ENCODE measurements at regions of chr5 and their contacts with region 1.

Region 1: DNA sequence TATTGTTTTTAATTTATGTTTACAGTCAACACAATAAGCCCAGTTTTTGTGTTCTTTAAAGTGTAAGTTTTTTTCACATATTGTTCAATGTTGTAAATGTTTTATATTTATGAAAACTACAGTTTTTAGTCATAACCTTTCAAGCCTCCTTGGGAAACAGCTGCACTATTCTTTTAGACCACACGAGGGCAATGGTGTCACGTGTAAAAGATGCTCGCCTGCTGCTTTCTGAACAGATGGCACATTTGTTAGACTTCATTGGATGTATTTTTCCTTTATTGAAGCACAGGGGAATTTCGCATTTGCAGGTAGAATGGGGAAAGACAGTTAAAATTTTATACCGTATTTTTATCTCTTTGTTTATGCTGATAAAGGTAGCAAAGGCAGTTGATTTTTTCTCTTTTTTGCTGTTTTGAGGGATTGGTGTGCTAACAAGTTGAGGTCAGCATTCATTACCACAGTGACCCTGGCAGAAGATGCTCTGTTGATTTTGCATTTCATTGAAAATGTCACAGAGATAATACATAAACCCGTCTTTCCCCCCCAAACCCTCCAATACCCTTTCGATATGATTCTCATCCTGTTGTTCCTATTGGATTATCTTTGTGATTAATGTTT is 59.0 kb downstream of the MAT2B start:
- DNase-seq: peak in 1 of 2 donors; percentile 67
- H3K4me3 ChIP-seq: no peak overlapping the region
- H3K27ac ChIP-seq: no peak overlapping the region
- H3K4me1 ChIP-seq: peaks cover 0 to 16% (median 9%) of the 10 kb centered on the region in 4 donors
- H3K27me3 ChIP-seq: peaks cover 0 to 27% of the 10 kb centered on the region in 2 donors
- CTCF ChIP-seq: peak; percentile 75 to 85

Region 2: DNA sequence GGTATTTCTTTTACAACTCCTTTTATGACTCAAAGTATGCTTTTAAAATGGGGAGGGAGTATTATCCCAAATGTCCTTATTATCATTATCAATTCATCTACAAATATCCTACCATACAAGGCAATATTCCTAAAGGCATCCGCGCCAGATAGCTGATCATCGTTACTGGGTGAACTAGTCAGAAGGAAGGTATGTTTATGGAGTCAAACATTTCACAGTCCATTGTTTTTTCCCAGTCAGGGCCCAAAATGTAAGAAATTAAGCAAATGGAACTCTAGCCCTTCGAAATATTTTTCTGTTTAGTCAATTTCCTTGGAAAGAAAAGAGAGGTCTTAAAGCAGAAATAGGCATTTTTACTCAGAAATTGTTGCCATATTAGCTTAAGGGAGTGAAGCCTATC is 315.6 kb before region 1 on chr5:
- intact Hi-C with region 1: no loop called
- DNase-seq: no peak
- H3K4me3 ChIP-seq: no peak overlapping the region
- H3K27ac ChIP-seq: no peak overlapping the region
- H3K4me1 ChIP-seq: no peaks in the 10 kb centered on the region
- H3K27me3 ChIP-seq: no peaks in the 10 kb centered on the region
- CTCF ChIP-seq: no peak

Region 3: DNA sequence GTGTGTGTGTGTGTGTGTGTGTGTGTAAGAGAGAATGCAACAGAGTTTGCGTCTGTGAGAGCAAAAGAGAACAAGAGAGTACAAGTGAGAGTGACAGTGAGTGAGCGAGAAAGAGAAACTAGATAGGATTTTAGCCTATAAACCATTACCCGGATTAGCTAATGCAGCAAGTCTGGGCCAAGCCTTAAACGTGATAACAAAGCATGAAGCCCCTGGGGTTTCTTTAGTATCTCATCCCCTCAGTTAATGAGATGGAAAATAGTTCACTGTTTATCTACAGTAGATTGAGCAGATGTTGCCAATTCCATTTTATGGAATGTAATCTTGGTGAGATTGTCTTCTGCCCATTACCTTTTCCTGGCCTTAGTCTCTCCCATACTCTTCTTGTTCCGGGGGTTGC is 55.5 kb after region 1 on chr5:
- intact Hi-C with region 1: no loop called
- DNase-seq: no peak
- H3K4me3 ChIP-seq: no peak overlapping the region
- H3K27ac ChIP-seq: no peak overlapping the region
- H3K4me1 ChIP-seq: no peaks in the 10 kb centered on the region
- H3K27me3 ChIP-seq: no peaks in the 10 kb centered on the region
- CTCF ChIP-seq: no peak

Region 4: DNA sequence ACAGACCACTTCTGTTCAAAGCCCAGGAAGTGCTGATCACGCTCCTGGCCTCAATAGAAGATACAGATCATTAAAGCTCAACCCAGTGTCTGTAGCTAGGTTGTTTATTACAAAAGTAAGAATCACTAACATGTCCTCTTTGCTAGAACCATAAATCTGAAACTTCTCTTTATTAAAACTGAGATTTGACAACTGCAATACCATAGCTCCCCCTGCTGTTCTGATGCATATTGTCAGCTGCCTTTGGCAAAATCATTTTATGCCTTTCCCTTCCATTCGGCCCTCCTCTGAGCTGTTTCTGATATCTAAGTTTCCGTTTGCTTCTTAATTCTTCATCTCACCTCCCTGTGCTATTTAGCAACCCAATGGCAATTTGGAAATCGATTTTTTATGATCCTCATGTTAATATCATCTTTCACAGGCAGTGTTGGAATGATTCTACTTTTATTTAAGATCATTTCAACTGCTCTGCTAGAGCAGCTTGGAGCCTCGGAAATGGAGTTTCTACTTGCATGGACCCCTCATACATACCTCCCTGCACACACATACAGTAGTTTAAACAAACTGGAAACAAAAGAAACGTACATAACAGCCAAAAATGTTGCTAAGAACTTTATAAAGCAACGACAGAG is 939.8 kb after region 1 on chr5:
- intact Hi-C with region 1: loop called (anchors 10 kb)
- DNase-seq: no peak
- H3K4me3 ChIP-seq: no peak overlapping the region
- H3K27ac ChIP-seq: no peak overlapping the region
- H3K4me1 ChIP-seq: no peaks in the 10 kb centered on the region
- H3K27me3 ChIP-seq: no peaks in the 10 kb centered on the region
- CTCF ChIP-seq: peak; percentile 50 to 67